KBM-7 (cell line): ENCODE measurements at regions of chr3 and their contacts with region 1.

Region 1: DNA sequence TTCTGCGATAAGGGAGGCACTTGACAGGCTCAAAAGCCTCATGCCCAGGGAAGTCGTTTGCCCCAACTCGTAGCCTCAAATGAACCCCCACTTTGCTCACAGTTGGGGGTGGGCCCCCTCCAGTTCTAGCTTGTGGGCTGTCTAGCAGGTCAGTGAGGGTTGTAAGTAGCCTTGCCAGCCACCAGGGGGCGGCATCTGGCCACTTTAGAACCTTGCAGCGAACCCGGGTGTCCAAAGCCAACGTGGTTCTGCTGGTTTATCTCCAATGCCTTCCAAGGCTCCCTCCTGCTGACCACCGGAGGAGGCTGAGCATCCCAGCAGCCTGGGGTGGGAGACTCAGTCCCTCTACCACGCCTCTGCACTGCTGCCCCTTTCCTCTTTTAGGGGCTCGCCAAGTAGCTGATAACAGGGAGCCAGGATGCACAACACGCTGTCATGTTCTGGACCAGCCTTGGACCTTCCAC is 9.2 kb upstream of the RBSN start:
- DNase-seq: peak; percentile 60

Region 2: GRCh38 chr3:15377961-15378791 is 270.1 kb after region 1 on chr3:
- in situ Hi-C with region 1: loop called (anchors 25 kb)
- DNase-seq: peak; percentile 94